ENCODE measurements at regions of chr11 and their contacts with region 1.

Region 1: GRCh38 chr11:72471005-72471898 is 36.9 kb upstream of the CLPB start:
- DNase-seq: peak; percentile 44 to 63
- H3K4me3 ChIP-seq: peak overlapping the region in 1 of 4 experiments; percentile 38; a peak in 1 of 8 replicates
- H3K27ac ChIP-seq: no peak overlapping the region
- H3K4me1 ChIP-seq: peaks cover 0 to 5% (median 0%) of the 10 kb centered on the region in 4 experiments; a peak in 2 of 7 replicates
- H3K27me3 ChIP-seq: peaks cover 0 to 3% (median under 1%) of the 10 kb centered on the region in 4 experiments; a peak in 2 of 7 replicates
- CTCF ChIP-seq: peak; percentile 68 to 85 (median 77)
- EP300 ChIP-seq: no peak
- POLR2A ChIP-seq: no peak
- RAD21 ChIP-seq: peak; percentile 81 to 85

Region 2: DNA sequence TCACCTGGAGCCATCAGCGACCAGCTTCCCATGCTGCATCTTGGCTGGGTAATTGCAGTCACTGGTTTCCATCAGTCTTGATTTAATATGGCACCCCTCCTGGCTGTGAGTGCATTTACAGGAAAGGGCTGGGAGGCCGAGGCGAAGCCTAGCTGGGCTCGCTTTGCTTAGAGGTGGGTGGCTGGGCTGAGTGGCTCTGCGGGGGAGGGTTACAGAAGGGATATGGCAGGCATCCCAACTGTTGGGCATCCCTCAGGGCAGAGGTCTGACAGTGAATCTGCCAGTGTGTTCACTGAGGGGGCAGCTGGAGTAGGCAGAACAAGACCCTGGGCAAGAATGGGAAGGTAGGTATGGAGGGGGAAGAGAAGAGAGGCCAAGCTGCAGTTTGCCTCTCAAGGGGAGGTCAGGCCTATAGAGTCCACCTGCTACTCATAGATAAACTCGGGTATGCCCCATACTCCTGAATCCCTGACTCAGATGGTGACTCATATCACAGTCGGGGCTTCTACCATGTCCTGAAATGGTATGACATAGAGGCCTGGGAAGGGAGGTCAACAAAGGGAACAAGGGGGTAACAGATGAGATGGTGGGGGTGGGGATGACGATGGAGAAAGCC is 149.8 kb before region 1 on chr11:
- CTCF ChIA-PET with region 1: no interaction called
- POLR2A ChIA-PET with region 1: no interaction called
- DNase-seq: no peak
- H3K4me3 ChIP-seq: no peak overlapping the region
- H3K27ac ChIP-seq: no peak overlapping the region
- H3K4me1 ChIP-seq: no peaks in the 10 kb centered on the region
- H3K27me3 ChIP-seq: no peaks in the 10 kb centered on the region
- CTCF ChIP-seq: no peak
- EP300 ChIP-seq: no peak
- POLR2A ChIP-seq: no peak
- RAD21 ChIP-seq: no peak

Region 3: GRCh38 chr11:72454791-72455190 is 16.5 kb before region 1 on chr11:
- CTCF ChIA-PET with region 1: interaction called, 51 read pairs
- POLR2A ChIA-PET with region 1: interaction called, 3 read pairs
- DNase-seq: no peak
- H3K4me3 ChIP-seq: no peak overlapping the region
- H3K27ac ChIP-seq: no peak overlapping the region
- H3K4me1 ChIP-seq: no peaks in the 10 kb centered on the region
- H3K27me3 ChIP-seq: no peaks in the 10 kb centered on the region; a peak in 3 of 7 replicates
- CTCF ChIP-seq: peak; percentile 38 to 56 (median 43)
- EP300 ChIP-seq: no peak
- POLR2A ChIP-seq: no peak
- RAD21 ChIP-seq: peak; percentile 12 to 44; a peak in 2 of 4 replicates

Region 4: GRCh38 chr11:72483412-72484186 is 12.3 kb after region 1 on chr11:
- CTCF ChIA-PET with region 1: interaction called, 34 read pairs
- POLR2A ChIA-PET with region 1: no interaction called
- DNase-seq: no peak
- H3K4me3 ChIP-seq: no peak overlapping the region
- H3K27ac ChIP-seq: no peak overlapping the region
- H3K4me1 ChIP-seq: no peaks in the 10 kb centered on the region
- H3K27me3 ChIP-seq: no peaks in the 10 kb centered on the region
- CTCF ChIP-seq: no peak
- EP300 ChIP-seq: no peak
- POLR2A ChIP-seq: no peak
- RAD21 ChIP-seq: no peak

Region 5: GRCh38 chr11:72541257-72541974 is 70.2 kb after region 1 on chr11:
- CTCF ChIA-PET with region 1: interaction called, 14 read pairs
- POLR2A ChIA-PET with region 1: no interaction called
- DNase-seq: no peak
- H3K4me3 ChIP-seq: no peak overlapping the region
- H3K27ac ChIP-seq: no peak overlapping the region
- H3K4me1 ChIP-seq: no peaks in the 10 kb centered on the region
- H3K27me3 ChIP-seq: no peaks in the 10 kb centered on the region; a peak in 1 of 7 replicates
- CTCF ChIP-seq: no peak
- EP300 ChIP-seq: no peak
- POLR2A ChIP-seq: no peak
- RAD21 ChIP-seq: no peak

Region 6: DNA sequence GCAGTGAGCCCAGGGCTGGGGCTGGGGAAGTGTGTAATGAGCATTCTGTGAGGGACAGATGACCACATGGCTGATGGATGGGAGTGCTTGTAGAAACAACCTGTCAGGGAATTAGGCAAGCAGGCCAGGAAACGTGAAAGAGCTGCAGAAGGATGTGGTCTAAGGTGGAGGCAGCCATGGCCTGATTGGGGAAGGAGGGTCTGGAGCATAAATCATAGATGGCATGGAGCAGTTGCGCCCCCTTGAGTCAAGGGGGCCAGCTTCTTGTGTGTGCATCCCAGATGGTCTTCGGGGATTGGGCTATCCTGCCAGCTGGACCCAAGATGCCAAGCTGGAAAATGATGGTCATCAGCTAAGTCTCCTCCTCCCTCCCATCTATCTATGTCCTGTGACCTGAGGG is 82.5 kb after region 1 on chr11:
- CTCF ChIA-PET with region 1: interaction called, 37 read pairs
- POLR2A ChIA-PET with region 1: interaction called, 5 read pairs
- DNase-seq: peak; percentile 25 to 74
- H3K4me3 ChIP-seq: no peak overlapping the region
- H3K27ac ChIP-seq: no peak overlapping the region
- H3K4me1 ChIP-seq: no peaks in the 10 kb centered on the region
- H3K27me3 ChIP-seq: no peaks in the 10 kb centered on the region
- CTCF ChIP-seq: peak; percentile 81 to 92 (median 84)
- EP300 ChIP-seq: no peak
- POLR2A ChIP-seq: no peak
- RAD21 ChIP-seq: peak; percentile 90 to 93

Region 7: GRCh38 chr11:72573072-72573854 is 102.0 kb after region 1 on chr11:
- CTCF ChIA-PET with region 1: interaction called, 32 read pairs
- POLR2A ChIA-PET with region 1: interaction called, 3 read pairs
- DNase-seq: peak in 1 of 2 experiments; percentile 85
- H3K4me3 ChIP-seq: no peak overlapping the region
- H3K27ac ChIP-seq: no peak overlapping the region
- H3K4me1 ChIP-seq: no peaks in the 10 kb centered on the region
- H3K27me3 ChIP-seq: no peaks in the 10 kb centered on the region
- CTCF ChIP-seq: peak; percentile 78 to 94 (median 89)
- EP300 ChIP-seq: no peak
- POLR2A ChIP-seq: no peak
- RAD21 ChIP-seq: peak; percentile 77 to 81

Region 8: DNA sequence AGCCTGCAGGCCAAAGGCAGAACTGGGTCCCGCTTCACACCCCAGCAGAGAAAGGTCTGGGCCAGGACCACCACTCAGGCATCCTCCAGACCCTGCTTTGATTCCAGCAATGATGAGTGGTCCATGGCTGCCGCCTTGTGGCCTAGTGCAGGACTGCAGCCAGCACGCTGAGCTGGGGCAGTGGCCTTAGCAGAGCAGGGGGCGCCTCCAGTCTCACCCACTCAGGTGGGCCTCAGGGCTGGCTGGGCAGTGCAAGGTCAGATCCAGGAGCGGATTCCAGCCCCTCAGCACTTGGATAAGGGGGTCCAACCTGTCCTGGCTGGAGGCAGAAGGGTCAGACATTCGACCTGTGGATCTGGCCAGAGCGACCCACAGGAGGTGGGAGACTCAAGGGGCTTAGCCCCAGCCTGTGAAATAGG is 212.5 kb after region 1 on chr11:
- CTCF ChIA-PET with region 1: interaction called, 15 read pairs
- POLR2A ChIA-PET with region 1: no interaction called
- DNase-seq: peak in 1 of 2 experiments; percentile 99
- H3K4me3 ChIP-seq: no peak overlapping the region
- H3K27ac ChIP-seq: no peak overlapping the region
- H3K4me1 ChIP-seq: peaks cover 0 to 16% (median 6%) of the 10 kb centered on the region in 4 experiments; a peak in 4 of 7 replicates
- H3K27me3 ChIP-seq: peaks cover 0 to 5% (median under 1%) of the 10 kb centered on the region in 4 experiments; a peak in 2 of 7 replicates
- CTCF ChIP-seq: peak; percentile 98 to 99 (median 99)
- EP300 ChIP-seq: no peak
- POLR2A ChIP-seq: no peak
- RAD21 ChIP-seq: peak; percentile 95 to 98